OCI-LY7 (cell line): ENCODE measurements at regions of chr3 and their contacts with region 1.

Region 1: GRCh38 chr3:195809281-195809785 is 2.4 kb downstream of the MUC4 start:
- DNase-seq: no peak
- H3K4me3 ChIP-seq: no peak overlapping the region
- H3K27ac ChIP-seq: no peak overlapping the region
- H3K4me1 ChIP-seq: peaks cover 18% of the 10 kb centered on the region
- CTCF ChIP-seq: no peak

Region 2: DNA sequence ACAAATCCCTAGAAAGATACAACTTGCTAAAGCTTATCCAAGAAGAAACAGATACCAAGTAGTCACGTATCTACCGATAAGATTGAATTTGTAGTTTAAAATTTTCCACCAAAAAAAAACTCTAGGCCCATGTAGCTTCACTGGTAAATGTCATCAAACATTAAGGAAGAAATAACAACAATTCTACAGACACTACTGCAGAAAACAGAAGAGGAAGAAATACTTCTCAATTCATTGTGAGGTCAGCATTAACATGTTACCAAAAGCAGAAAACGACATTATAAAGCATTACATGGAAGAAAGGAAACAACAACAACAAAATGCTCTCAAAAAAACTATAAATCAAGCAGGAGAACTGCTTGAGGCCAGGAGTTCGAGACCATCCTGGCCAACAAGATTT is 556.4 kb after region 1 on chr3:
- CTCF ChIA-PET with region 1: no interaction called
- POLR2A ChIA-PET with region 1: interaction called, 10 read pairs
- intact Hi-C with region 1: no loop called
- DNase-seq: no peak
- H3K4me3 ChIP-seq: no peak overlapping the region
- H3K27ac ChIP-seq: no peak overlapping the region
- H3K4me1 ChIP-seq: no peaks in the 10 kb centered on the region
- CTCF ChIP-seq: no peak